ENCODE measurements at regions of chr12 and their contacts with region 1.

Region 1: GRCh38 chr12:48977315-48978281 is 524 bp upstream of the WNT1 start:
- DNase-seq: no peak
- H3K4me3 ChIP-seq: no peak overlapping the region
- H3K27ac ChIP-seq: no peak overlapping the region
- H3K4me1 ChIP-seq: peaks cover 13% of the 10 kb centered on the region
- H3K27me3 ChIP-seq: peaks cover 63 to 66% of the 10 kb centered on the region in 2 experiments
- CTCF ChIP-seq: peak; percentile 62 to 90
- POLR2A ChIP-seq: no peak

Region 2: DNA sequence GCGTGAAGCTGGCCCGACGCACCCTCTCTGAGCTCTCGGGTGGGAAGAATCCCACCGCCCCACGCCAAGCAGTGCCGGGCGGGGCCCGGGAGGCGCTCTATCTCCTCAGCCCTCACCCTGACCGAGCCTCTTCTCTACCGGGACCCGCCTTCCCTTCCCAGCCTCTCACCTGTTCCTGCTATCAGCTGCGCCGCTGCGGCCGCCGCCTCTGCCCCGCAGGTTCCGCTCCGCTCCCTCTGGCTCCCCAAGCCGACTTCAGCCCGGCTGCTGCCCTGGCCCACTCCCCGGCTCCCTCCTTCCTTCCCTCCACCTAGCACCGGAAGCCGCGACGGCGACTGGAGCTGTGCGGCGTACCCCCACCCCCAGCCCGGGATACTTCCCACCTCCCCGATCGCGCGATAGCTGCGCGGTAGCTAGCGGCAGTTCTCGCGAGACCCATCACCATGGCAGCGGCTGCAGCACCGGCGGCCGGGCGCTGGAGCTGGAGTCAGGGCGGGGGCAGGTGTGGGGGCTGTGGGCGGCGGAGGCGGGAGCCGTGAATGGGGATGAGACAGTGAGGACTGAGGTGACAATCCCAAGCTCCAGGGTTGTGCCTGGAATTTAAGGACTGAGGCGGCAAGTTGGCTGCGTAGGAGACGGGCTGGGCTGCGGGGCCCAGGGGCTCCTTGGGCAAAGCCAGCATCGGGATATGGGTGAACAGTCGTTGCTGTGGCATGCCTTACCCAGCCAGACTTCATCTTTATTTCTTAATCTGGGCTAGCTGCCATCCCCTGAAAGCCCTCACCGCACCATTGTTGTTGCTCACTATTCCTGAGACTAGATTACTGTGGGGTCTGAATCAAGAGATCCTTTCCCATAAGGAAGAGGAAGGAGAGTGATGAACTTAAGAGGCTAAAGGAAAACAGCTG is 20.2 kb before region 1 on chr12 and contains the start of gene ARF3:
- CTCF ChIA-PET with region 1: interaction called, 16 read pairs
- POLR2A ChIA-PET with region 1: no interaction called
- dilution Hi-C with region 1: no loop called
- intact Hi-C with region 1: loop called (anchors 1 kb)
- DNase-seq: peak; percentile 94
- H3K4me3 ChIP-seq: peak within 1 kb of the TSS; percentile 71 to 99 (median 90)
- H3K27ac ChIP-seq: peak within 1 kb of the TSS; percentile 76
- H3K4me1 ChIP-seq: peaks cover 31% of the 10 kb centered on the region
- H3K27me3 ChIP-seq: no peaks in the 10 kb centered on the region
- CTCF ChIP-seq: no peak
- POLR2A ChIP-seq: peak; percentile 54
- total RNA-seq, gene ARF3: 172 and 187 TPM in 2 replicates

Region 3: DNA sequence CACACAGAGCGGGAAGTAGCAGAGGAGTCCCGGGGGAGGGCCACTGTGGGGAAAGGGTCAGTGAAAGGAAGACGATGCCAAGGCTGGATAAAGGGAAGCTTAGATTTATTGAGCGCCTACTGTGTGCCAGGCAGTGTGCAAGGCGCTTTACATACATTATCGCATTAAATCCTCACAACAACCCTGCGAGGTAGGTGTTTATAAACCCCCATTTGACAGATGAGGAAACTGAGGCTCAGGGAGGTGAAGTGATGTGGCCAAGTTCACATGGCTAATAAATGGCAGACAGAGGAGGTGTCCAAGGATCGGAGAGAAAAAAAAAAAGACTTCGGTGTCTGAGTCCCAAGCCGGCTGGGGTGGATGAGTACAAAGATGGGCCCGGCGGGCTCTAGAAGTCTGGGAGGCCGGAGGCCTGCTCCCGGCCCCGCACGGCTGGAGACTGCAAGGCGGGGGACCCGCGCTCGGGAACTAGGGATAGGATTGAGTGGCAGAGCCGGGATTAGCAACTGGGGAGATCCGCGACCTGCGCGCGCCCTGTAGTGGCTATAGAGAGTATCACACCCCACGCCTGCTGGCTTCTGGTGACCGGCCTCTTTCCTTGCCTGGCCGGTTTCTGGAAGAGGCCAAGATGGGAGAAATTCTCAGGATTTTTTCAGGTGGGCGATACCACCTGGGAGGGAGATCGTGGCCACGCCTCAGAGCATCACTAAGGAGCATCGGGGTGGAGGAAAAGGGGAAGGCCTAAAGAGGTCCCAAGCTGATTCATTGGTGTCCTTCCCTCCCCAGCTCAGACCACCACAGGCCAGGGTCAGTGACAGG is 17.7 kb after region 1 on chr12:
- CTCF ChIA-PET with region 1: interaction called, 175 read pairs
- POLR2A ChIA-PET with region 1: no interaction called
- dilution Hi-C with region 1: no loop called
- intact Hi-C with region 1: loop called (anchors 1 kb)
- DNase-seq: peak; percentile 77
- H3K4me3 ChIP-seq: no peak overlapping the region
- H3K27ac ChIP-seq: no peak overlapping the region
- H3K4me1 ChIP-seq: peaks cover 11% of the 10 kb centered on the region
- H3K27me3 ChIP-seq: peaks cover 25 to 26% of the 10 kb centered on the region in 2 experiments
- CTCF ChIP-seq: peak; percentile 69 to 85
- POLR2A ChIP-seq: no peak

Measured in endothelial cell of umbilical vein (primary cell).